ENCODE measurements at regions of chr5 and their contacts with region 1.

Region 1: GRCh38 chr5:155728146-155728856 is 598.7 kb upstream of the SGCD start:
- DNase-seq: no peak
- H3K4me3 Mint-ChIP-seq: no peak overlapping the region
- H3K27ac Mint-ChIP-seq: no peak overlapping the region
- H3K4me1 Mint-ChIP-seq: no peaks in the 10 kb centered on the region
- H3K27me3 Mint-ChIP-seq: peaks cover 42% of the 10 kb centered on the region

Region 2: DNA sequence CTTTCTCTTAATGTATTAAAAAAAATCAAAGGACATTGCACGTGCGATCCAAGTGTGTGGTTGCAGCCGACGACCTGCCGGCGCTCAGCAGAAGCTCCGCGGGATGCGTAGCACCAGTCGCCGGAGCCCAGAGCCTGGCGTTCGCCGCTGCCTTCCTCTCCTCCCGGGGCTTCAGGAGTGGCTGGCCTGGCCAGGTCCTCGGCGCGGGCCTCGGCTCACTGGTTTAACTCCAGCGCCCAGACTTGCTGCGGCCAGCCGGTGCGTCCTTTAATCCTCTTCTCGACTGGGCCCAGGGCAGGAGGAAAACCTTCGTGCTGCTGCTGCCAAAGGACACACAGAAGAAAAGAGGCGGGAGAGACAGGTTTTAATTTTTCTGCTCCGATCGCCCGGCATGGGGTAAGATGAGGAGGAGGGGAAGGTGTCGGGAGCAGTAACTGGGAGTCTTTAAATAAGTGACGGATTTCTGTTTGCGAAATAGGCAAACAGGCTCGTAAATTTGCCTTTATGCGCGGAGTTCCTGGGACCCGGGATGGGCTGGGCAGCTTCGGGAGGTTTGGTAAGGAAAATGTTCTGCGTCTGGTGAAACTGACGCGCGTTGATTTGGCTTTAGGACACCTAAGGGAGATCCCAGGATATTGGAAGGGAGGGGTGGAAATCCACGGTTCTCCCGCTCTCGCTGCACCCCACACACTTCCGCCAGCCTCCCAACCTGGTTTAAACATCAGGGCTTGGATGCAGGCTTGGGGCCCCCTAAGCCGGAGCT is 1252.5 kb before region 1 on chr5:
- intact Hi-C with region 1: loop called (anchors 5 kb)
- DNase-seq: no peak
- H3K4me3 Mint-ChIP-seq: no peak overlapping the region
- H3K27ac Mint-ChIP-seq: peak overlapping the region; percentile 86
- H3K4me1 Mint-ChIP-seq: peaks cover 37% of the 10 kb centered on the region
- H3K27me3 Mint-ChIP-seq: peaks cover 85% of the 10 kb centered on the region

Measured in activated T-helper 1 cell treated with anti-CD3 and anti-CD28 coated beads, Interleukin-12 subunit alpha, Interleukin-12 subunit beta, Interleukin-2, Interleukin-4 antibody, amounts not matched to agents 30 ng/mL and 10 ng/mL and 1 ng/mL, durations not matched to agents 14 hours and 24 hours and 36 hours (primary cell).